ENCODE measurements at regions of chrX and their contacts with region 1.

Region 1: DNA sequence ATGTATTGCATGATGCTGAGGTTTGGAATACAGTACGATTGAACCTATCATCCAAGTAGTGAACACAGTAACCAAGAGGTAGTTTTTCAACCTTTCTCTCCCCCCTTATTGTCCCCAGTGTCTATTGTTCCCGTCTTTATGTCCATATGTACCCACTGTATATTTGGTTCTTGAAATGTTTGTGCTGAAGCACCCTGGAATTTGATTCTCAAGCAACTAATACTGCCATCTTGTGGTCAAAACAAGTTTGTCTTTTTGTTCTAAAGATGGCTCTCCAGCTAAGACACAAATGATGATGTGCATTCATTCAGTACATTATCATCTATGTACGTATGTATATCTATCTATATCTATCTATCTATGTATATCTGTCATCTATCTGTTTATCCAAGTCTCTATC is 33.5 kb upstream of the DCX start:
- DNase-seq: peak; percentile 13 to 48 (median 18)
- ATAC-seq: peak; percentile 71
- H3K4me3 ChIP-seq: no peak overlapping the region
- H3K27ac ChIP-seq: no peak overlapping the region
- H3K4me1 ChIP-seq: no peaks in the 10 kb centered on the region
- H3K27me3 ChIP-seq: no peaks in the 10 kb centered on the region
- CTCF ChIP-seq: peak; percentile 24 to 54 (median 45); a peak in 4 of 6 replicates
- EP300 ChIP-seq: no peak
- POLR2A ChIP-seq: no peak
- RAD21 ChIP-seq: peak in 1 of 2 experiments; percentile 51; a peak in 3 of 4 replicates

Region 2: DNA sequence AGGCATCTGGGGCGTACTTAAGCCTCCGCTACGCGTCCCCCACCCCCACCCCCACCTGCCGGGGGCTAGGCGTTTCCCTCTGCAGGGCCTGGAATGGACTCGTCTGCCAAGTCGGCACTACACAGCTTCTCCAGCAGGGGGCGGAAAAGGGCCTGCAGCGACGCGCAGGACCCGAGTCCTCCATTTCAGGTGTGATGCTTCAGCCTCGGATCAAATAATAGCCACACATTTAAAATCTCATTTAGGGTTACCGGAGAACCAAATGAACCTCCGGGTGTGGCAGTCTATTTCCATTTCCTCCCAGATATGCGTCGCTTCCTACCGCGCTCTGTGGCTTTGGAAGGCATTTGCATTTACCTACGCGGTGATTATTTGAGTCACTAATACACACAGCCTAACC is 346.6 kb before region 1 on chrX:
- CTCF ChIA-PET with region 1: interaction called, 3 read pairs
- POLR2A ChIA-PET with region 1: no interaction called
- in situ Hi-C with region 1: no loop called
- intact Hi-C with region 1: loop called (anchors 10 kb)
- DNase-seq: peak; percentile 55 to 69 (median 64)
- ATAC-seq: peak; percentile 92
- H3K4me3 ChIP-seq: no peak overlapping the region
- H3K27ac ChIP-seq: no peak overlapping the region
- H3K4me1 ChIP-seq: peaks cover 0 to 6% of the 10 kb centered on the region in 2 experiments; a peak in 1 of 5 replicates
- H3K27me3 ChIP-seq: no peaks in the 10 kb centered on the region
- CTCF ChIP-seq: peak; percentile 59 to 77 (median 68)
- EP300 ChIP-seq: no peak
- POLR2A ChIP-seq: no peak
- RAD21 ChIP-seq: peak in 1 of 2 experiments; percentile 29; a peak in 1 of 4 replicates

Region 3: DNA sequence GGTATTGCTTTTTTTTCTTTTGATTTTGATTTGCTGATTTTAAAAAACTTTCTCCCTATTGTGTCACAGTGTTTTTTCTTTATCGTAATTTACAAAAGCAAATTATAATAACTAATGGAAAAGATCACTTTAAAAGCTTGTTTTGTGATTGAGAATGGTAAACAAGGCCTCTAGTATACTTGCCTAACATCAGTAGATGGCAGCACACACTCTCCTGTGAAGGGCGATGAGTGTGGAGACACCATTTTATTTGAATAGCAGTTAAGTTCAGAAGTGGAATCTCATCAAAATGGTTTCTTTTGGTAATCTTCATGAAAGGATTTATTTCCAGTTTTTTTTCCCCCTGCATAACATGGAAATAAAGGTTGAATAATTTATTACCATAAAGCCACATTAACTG is 277.2 kb before region 1 on chrX:
- CTCF ChIA-PET with region 1: no interaction called
- POLR2A ChIA-PET with region 1: no interaction called
- in situ Hi-C with region 1: no loop called
- intact Hi-C with region 1: loop called (anchors 5 kb)
- DNase-seq: peak in 2 of 4 experiments; percentile 3 to 4
- ATAC-seq: peak; percentile 52; the same call in 1 of the 3 replicates
- H3K4me3 ChIP-seq: no peak overlapping the region
- H3K27ac ChIP-seq: no peak overlapping the region
- H3K4me1 ChIP-seq: no peaks in the 10 kb centered on the region
- H3K27me3 ChIP-seq: no peaks in the 10 kb centered on the region
- CTCF ChIP-seq: peak in 2 of 3 experiments; percentile 5 to 34; a peak in 3 of 6 replicates
- EP300 ChIP-seq: no peak
- POLR2A ChIP-seq: no peak
- RAD21 ChIP-seq: peak in 1 of 2 experiments; percentile 20; a peak in 2 of 4 replicates